ENCODE measurements at regions of chr10 and their contacts with region 1.

Region 1: DNA sequence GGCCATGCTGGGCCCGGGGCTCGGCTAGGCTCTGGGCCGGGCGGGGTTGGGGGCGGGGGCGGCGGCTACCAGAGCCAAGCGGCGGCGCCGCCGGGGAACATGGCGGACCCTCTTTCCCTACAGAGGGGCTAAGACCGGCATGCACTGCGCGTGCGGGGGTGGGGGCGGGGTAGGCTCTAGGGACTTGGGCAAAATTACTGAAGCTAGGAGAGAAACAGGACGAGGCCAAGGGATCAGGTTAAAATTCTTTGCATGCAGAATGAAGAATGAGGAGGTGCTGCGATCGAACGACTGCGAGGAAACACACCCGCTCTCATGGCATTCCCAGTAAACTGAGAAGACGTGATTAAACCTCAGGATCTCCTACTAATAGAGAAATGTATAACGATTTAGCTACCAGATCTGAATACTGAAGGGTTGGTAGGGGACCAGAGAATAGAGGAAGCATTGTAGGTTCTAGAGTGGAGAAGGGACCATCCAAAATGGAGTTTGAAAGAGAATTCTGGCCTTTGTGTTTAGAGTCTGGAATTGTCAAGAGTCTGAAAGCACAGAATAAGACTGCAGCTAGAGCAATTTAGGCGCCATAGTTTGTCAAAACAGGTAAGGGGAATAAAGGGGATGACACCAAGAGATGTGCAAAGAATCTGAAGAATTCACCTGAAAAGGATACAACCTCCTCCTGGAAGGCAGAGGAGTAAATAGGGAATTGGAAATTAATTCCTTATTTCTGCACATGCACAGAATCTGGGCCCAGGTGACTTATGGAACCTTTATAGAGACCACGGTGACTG is at the start of gene PPP3CB:
- DNase-seq: peak; percentile 91 to 94 (median 94)
- ATAC-seq: peak; percentile 91 to 95 (median 92)
- H3K4me3 ChIP-seq: peak within 1 kb of the TSS; percentile 59 to 99 (median 80)
- H3K27ac ChIP-seq: peak within 1 kb of the TSS; percentile 85 to 99 (median 94)
- H3K4me1 ChIP-seq: peaks cover 6 to 50% (median 33%) of the 10 kb centered on the region in 12 donors
- H3K27me3 ChIP-seq: no peaks in the 10 kb centered on the region
- CTCF ChIP-seq: no peak
- POLR2A ChIP-seq: no peak
- total RNA-seq, gene PPP3CB: 46.6 to 77.1 (median 65.0) TPM

Region 2: GRCh38 chr10:72133517-72133916 is 1362.6 kb before region 1 on chr10:
- intact Hi-C with region 1: no loop called
- DNase-seq: no peak
- ATAC-seq: peak in 3 of 4 donors; percentile 40 to 66 (median 43)
- H3K4me3 ChIP-seq: no peak overlapping the region
- H3K27ac ChIP-seq: no peak overlapping the region
- H3K4me1 ChIP-seq: peaks cover 0 to 16% (median 1%) of the 10 kb centered on the region in 12 donors
- H3K27me3 ChIP-seq: no peaks in the 10 kb centered on the region
- CTCF ChIP-seq: no peak
- POLR2A ChIP-seq: no peak

Region 3: DNA sequence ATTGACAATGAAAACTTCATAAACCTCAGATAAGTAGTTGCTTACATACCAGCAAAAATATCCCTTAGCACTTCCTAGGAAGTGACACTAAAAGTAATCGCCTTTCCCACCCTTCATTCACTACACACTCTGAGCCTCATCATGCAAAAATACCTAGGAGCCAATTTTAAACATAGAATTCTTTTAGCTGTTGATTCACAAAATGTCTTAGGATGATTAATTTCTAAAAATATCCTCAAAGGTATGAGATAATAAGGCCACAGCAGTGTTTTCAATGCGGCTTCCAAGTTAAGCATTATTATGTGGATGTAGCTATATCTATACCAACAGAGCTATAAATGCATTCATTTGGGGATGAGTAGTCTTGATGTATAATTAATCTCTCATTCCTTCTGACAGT is 262.2 kb before region 1 on chr10:
- intact Hi-C with region 1: no loop called
- DNase-seq: no peak
- ATAC-seq: peak in 3 of 4 donors; percentile 14 to 35 (median 27)
- H3K4me3 ChIP-seq: no peak overlapping the region
- H3K27ac ChIP-seq: peak overlapping the region in 7 of 12 donors; percentile 4 to 65 (median 26)
- H3K4me1 ChIP-seq: peaks cover 0 to 14% (median 2%) of the 10 kb centered on the region in 12 donors
- H3K27me3 ChIP-seq: no peaks in the 10 kb centered on the region
- CTCF ChIP-seq: no peak
- POLR2A ChIP-seq: no peak

Region 4: DNA sequence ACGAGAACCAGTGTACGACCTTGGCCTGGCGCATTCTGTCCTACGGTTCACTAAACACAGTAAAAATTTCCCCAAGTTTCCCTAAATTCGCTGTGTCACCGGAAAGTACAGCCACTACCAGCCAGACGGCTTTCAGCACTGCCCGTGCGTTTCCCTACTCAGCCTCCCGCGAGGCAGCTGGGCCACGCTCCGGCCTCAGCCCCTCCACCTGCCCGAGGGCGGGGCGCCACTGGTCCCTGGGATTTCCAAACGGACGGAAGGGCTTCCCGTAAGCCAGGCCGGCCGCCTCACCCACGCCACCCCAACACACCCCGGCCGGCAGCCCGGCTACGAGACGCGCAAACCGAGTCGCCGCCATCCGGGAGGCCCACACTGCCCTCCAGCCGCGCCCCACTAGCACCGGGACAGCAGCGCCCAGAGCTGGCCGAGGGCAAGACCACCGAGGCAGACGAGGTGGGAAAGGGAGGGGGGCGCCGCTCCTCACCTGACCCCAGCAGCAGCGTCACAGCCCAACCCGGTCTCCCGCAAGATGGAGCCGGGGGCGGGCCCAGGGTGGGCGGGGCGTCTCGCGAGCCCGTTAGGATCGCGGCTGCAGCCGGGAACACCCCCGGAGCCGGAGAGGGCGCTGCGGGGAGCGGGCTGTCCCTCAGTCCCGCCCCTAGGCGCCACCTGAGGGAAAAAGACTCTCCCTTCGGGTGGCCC is 82.4 kb before region 1 on chr10 and contains the start of gene ANXA7:
- intact Hi-C with region 1: loop called in 3 of 10 experiments (anchors 5 to 10 kb)
- DNase-seq: peak; percentile 95 to 96 (median 96)
- ATAC-seq: peak; percentile 97 to 99 (median 98)
- H3K4me3 ChIP-seq: peak within 1 kb of the TSS; percentile 67 to 99 (median 89)
- H3K27ac ChIP-seq: peak within 1 kb of the TSS; percentile 92 to 98 (median 95)
- H3K4me1 ChIP-seq: peaks cover 0 to 40% (median 23%) of the 10 kb centered on the region in 12 donors
- H3K27me3 ChIP-seq: no peaks in the 10 kb centered on the region
- CTCF ChIP-seq: peak; percentile 10 to 69 (median 37)
- POLR2A ChIP-seq: peak; percentile 20 to 80
- total RNA-seq, gene ANXA7: 100 to 170 (median 126) TPM